ENCODE measurements at regions of chr3 and their contacts with region 1.

Region 1: DNA sequence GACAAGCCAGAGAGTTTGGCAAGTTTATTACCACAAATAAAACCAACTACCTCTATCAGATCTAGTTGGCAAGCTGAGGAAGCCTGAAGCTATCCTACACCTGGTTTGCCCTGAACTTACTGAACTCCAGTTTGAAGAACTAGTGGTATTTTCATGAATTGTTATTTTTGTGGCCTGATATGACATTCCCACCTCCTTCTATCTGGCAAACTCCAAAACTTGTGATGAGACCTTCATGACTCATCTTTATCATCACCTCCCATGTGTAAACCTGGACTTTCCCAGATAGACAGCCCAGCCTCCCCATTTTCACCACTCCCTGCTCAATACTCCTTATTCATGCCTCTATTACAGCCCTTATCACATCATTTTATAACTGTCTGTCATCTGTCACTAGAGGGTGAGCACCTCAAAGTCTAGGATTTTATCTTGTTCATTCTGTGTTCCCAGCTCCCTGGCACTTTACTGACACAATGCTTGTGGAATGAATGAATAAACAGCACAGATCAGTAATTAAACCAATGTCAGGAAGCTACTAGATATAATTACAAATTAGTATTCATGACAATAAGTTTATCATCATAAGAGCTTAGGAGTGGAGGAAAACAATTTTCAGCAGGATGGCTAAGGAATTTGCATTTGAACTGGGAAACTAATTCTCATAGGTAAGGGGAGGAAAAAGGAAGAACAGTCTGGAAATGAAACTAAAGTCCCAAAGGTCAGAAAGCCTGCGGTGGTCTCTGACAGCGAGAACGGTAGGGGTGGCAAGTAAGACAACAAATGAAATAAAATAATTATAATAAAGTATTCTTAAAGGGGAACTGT is 13.2 kb upstream of the TRANK1 start:
- DNase-seq: no peak
- H3K4me3 Mint-ChIP-seq: no peak overlapping the region
- H3K27ac Mint-ChIP-seq: no peak overlapping the region
- H3K4me1 Mint-ChIP-seq: peaks cover 7% of the 10 kb centered on the region
- H3K27me3 Mint-ChIP-seq: no peaks in the 10 kb centered on the region

Region 2: GRCh38 chr3:36734742-36735141 is 223.3 kb before region 1 on chr3:
- CTCF ChIA-PET with region 1: interaction called, 27 read pairs
- POLR2A ChIA-PET with region 1: no interaction called
- DNase-seq: no peak
- H3K4me3 Mint-ChIP-seq: no peak overlapping the region
- H3K27ac Mint-ChIP-seq: no peak overlapping the region
- H3K4me1 Mint-ChIP-seq: no peaks in the 10 kb centered on the region
- H3K27me3 Mint-ChIP-seq: no peaks in the 10 kb centered on the region

Region 3: DNA sequence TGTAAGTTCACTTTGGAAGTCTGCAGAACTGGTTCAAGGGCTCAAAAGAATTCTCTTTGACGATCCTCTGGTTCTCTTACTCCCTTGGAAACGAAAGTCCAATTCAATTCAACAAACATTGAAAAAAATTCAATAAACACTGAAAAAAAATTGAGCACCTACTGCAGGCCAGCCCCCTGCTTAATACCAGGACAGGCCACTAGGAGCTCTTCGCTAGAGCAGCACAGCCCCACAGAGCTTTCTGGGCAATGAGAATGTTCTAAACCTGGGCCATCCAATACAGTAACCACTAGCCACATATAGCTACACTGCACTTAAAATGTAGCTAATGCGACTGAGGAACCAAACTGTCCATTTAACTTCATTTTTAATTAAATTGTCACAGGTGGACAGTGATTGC is 143.3 kb before region 1 on chr3:
- CTCF ChIA-PET with region 1: interaction called, 11 read pairs
- POLR2A ChIA-PET with region 1: no interaction called
- DNase-seq: no peak
- H3K4me3 Mint-ChIP-seq: no peak overlapping the region
- H3K27ac Mint-ChIP-seq: no peak overlapping the region
- H3K4me1 Mint-ChIP-seq: no peaks in the 10 kb centered on the region
- H3K27me3 Mint-ChIP-seq: peaks cover 2% of the 10 kb centered on the region

Region 4: GRCh38 chr3:36868614-36869436 is 89.2 kb before region 1 on chr3:
- CTCF ChIA-PET with region 1: interaction called, 29 read pairs
- POLR2A ChIA-PET with region 1: no interaction called
- DNase-seq: peak; percentile 42
- H3K4me3 Mint-ChIP-seq: no peak overlapping the region
- H3K27ac Mint-ChIP-seq: no peak overlapping the region
- H3K4me1 Mint-ChIP-seq: peaks cover 17% of the 10 kb centered on the region
- H3K27me3 Mint-ChIP-seq: peaks cover 3% of the 10 kb centered on the region

Region 5: GRCh38 chr3:36911990-36912804 is 45.9 kb before region 1 on chr3:
- CTCF ChIA-PET with region 1: interaction called, 37 read pairs
- POLR2A ChIA-PET with region 1: interaction called, 5 read pairs
- DNase-seq: peak; percentile 39
- H3K4me3 Mint-ChIP-seq: peak overlapping the region; percentile 74
- H3K27ac Mint-ChIP-seq: peak overlapping the region; percentile 90
- H3K4me1 Mint-ChIP-seq: peaks cover 41% of the 10 kb centered on the region
- H3K27me3 Mint-ChIP-seq: peaks cover 5% of the 10 kb centered on the region

Region 6: GRCh38 chr3:36969540-36970432 is 11.7 kb after region 1 on chr3:
- CTCF ChIA-PET with region 1: interaction called, 23 read pairs
- POLR2A ChIA-PET with region 1: interaction called, 3 read pairs
- DNase-seq: peak; percentile 48
- H3K4me3 Mint-ChIP-seq: no peak overlapping the region
- H3K27ac Mint-ChIP-seq: peak overlapping the region; percentile 17
- H3K4me1 Mint-ChIP-seq: peaks cover 31% of the 10 kb centered on the region
- H3K27me3 Mint-ChIP-seq: no peaks in the 10 kb centered on the region

Region 7: GRCh38 chr3:36993326-36994283 is 35.5 kb after region 1 on chr3 and contains the start of gene MLH1:
- CTCF ChIA-PET with region 1: interaction called, 18 read pairs
- POLR2A ChIA-PET with region 1: interaction called, 10 read pairs
- DNase-seq: peak; percentile 99
- H3K4me3 Mint-ChIP-seq: no peak within 1 kb of the TSS
- H3K27ac Mint-ChIP-seq: no peak within 1 kb of the TSS
- H3K4me1 Mint-ChIP-seq: peaks cover 37% of the 10 kb centered on the region
- H3K27me3 Mint-ChIP-seq: no peaks in the 10 kb centered on the region
- total RNA-seq, gene MLH1: 50.9 to 57.5 TPM